Adrenal gland (tissue), 19 donors: ENCODE measurements at regions of chr1 and their contacts with region 1.

Region 1: DNA sequence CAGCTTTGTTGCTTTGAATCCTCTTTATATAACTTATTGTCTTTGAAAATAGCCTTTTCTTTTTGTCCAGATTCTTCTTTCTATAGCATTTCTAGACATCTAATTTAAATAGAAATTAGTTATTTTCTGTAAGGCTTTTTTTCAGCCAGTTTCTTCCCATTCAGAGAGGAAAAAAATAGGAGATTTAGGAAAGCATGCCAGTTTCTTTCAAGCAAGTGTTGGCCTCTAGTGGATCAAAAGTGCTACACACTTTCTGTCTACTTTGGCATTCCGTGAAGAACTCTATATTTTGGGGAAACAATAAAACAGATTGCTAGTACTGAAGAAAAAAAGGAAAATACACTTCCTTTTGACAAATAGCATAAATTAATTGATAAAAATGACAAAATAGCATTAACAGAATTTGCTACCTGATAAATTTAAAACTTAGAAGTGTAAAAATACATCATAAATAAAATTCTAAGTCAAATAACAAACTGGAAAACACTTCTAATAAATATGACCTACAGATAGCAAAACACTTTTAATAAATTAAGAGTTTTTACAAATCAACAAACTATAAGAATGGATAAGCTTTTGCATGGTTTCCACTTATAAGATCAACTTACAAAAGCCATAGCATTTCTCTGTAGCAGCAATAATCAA is 13.1 kb upstream of the EXO1 start:
- DNase-seq: peak in 1 of 7 donors; percentile 10
- H3K4me3 ChIP-seq: no peak overlapping the region
- H3K27ac ChIP-seq: no peak overlapping the region
- H3K4me1 ChIP-seq: no peaks in the 10 kb centered on the region
- H3K27me3 ChIP-seq: no peaks in the 10 kb centered on the region
- CTCF ChIP-seq: peak; percentile 58 to 75 (median 68)
- POLR2A ChIP-seq: no peak

Region 2: GRCh38 chr1:241611063-241611462 is 223.8 kb before region 1 on chr1:
- intact Hi-C with region 1: loop called in 1 of 2 experiments (anchors 5 kb)
- DNase-seq: peak in 3 of 7 donors; percentile 18 to 31 (median 20)
- H3K4me3 ChIP-seq: no peak overlapping the region
- H3K27ac ChIP-seq: no peak overlapping the region
- H3K4me1 ChIP-seq: peaks cover 0 to 7% of the 10 kb centered on the region in 2 donors
- H3K27me3 ChIP-seq: no peaks in the 10 kb centered on the region
- CTCF ChIP-seq: peak; percentile 71 to 84 (median 78)
- POLR2A ChIP-seq: no peak